Activated T-helper 2 cell treated with anti-CD3 and anti-CD28 coated beads, Interferon-gamma antibody, Interleukin-2, Interleukin-4, amounts not matched to agents 10 μg/mL and 5 μg/mL and 100 μg/mL, durations not matched to agents 14 hours and 24 hours and 36 hours (primary cell): ENCODE measurements at regions of chr2 and their contacts with region 1.

Region 1: GRCh38 chr2:165953655-165954606 is at the start of gene TTC21B:
- DNase-seq: peak; percentile 91
- H3K4me3 Mint-ChIP-seq: peak within 1 kb of the TSS; percentile 43
- H3K27ac Mint-ChIP-seq: no peak within 1 kb of the TSS
- H3K4me1 Mint-ChIP-seq: peaks cover 6% of the 10 kb centered on the region
- H3K27me3 Mint-ChIP-seq: no peaks in the 10 kb centered on the region
- total RNA-seq, gene TTC21B: 19.7 and 23.4 TPM in 2 replicates

Region 2: GRCh38 chr2:165401285-165401852 is 552.6 kb before region 1 on chr2:
- intact Hi-C with region 1: loop called (anchors 5 kb)
- DNase-seq: no peak
- H3K4me3 Mint-ChIP-seq: no peak overlapping the region
- H3K27ac Mint-ChIP-seq: no peak overlapping the region
- H3K4me1 Mint-ChIP-seq: peaks cover 5% of the 10 kb centered on the region
- H3K27me3 Mint-ChIP-seq: peaks cover 20% of the 10 kb centered on the region

Region 3: DNA sequence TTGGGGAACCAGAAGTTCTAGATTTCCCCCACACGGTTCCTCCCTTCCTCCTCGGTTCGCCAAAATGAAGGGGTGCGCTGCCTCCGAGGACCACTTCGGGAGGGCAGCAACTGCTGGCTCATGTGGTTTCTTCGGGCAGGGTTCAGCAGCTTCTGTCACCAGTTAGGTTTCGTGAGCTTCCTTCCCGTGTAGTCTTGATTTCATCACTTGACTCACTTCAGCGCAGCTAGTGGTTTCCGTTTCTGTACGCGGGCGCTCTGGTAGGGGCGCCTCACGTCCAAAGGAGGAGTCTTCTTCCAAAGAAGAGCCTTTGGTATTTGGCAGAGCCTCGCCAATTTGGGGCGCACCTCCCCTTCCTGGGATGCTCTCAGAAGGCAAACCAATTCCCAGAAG is 159.4 kb before region 1 on chr2:
- intact Hi-C with region 1: loop called (anchors 5 kb)
- DNase-seq: peak; percentile 76
- H3K4me3 Mint-ChIP-seq: peak overlapping the region; percentile 93
- H3K27ac Mint-ChIP-seq: peak overlapping the region; percentile 96
- H3K4me1 Mint-ChIP-seq: peaks cover 54% of the 10 kb centered on the region
- H3K27me3 Mint-ChIP-seq: no peaks in the 10 kb centered on the region

Region 4: DNA sequence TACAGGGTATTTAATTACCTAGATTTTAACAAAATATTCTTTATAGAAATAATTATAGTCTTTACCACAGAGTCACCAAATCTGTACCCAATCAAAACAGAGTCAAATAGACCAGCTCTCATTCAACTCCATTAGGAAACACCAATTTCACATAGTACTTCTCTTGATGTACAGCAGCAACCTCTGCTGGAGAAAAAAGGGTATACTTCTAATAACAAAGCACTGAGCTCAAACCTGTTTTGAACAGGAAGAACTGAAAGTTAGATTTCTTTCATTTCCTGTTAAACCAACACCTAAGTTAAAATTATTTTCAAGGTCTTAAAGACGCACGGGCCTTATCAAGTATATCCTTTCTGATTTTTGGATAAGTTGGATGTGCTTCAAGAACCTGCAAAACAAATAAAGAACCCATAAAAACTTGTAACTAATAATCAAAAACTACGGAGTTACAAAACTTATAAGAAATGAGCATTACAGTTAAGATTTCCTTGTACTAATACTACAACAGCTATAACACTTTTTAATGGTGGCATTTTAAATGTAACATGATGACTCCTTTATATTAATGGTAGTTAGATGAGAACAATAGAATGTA is 79.4 kb before region 1 on chr2:
- intact Hi-C with region 1: loop called (anchors 5 kb)
- DNase-seq: no peak
- H3K4me3 Mint-ChIP-seq: no peak overlapping the region
- H3K27ac Mint-ChIP-seq: no peak overlapping the region
- H3K4me1 Mint-ChIP-seq: peaks cover 24% of the 10 kb centered on the region
- H3K27me3 Mint-ChIP-seq: no peaks in the 10 kb centered on the region

Region 5: DNA sequence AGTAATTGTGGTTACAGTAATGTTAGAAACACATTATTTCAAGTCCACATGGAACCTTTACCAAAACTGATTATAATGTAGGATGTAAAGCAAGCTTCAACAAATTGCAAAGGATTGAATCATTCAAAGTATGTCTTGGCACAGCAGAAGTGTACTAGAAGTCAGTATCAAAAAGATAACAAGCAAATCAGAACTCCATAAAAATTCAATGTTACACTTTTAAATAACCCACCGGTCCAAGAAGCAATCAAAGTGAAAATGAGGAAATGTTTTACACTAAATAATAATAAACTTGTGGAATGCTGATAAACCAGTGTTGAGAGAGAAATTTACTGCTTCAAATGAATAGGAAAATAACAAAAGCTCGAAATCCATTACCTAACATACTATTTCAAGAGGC is 48.1 kb before region 1 on chr2:
- intact Hi-C with region 1: loop called (anchors 5 kb)
- DNase-seq: no peak
- H3K4me3 Mint-ChIP-seq: no peak overlapping the region
- H3K27ac Mint-ChIP-seq: no peak overlapping the region
- H3K4me1 Mint-ChIP-seq: peaks cover 10% of the 10 kb centered on the region
- H3K27me3 Mint-ChIP-seq: no peaks in the 10 kb centered on the region

Region 6: DNA sequence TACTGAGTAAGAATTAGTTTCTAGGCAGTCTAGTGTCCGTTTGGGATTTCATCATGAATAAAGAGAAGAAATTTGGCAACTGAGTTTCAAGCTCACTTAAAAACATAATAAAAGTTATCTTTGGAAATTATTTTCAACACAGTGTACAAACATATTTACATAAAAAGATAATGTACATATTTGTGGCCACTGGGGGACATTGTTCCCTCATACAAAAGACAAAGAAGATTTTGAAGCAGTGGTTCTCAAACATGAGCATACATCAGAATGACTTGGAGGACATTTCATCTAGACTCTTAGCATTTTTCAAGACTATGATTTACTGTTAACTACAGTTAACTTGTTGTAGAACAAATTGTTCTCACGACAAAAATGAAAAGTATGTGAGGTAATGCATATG is 15.3 kb after region 1 on chr2:
- intact Hi-C with region 1: loop called (anchors 2 kb)
- DNase-seq: no peak
- H3K4me3 Mint-ChIP-seq: no peak overlapping the region
- H3K27ac Mint-ChIP-seq: no peak overlapping the region
- H3K4me1 Mint-ChIP-seq: no peaks in the 10 kb centered on the region
- H3K27me3 Mint-ChIP-seq: peaks cover 5% of the 10 kb centered on the region

Region 7: DNA sequence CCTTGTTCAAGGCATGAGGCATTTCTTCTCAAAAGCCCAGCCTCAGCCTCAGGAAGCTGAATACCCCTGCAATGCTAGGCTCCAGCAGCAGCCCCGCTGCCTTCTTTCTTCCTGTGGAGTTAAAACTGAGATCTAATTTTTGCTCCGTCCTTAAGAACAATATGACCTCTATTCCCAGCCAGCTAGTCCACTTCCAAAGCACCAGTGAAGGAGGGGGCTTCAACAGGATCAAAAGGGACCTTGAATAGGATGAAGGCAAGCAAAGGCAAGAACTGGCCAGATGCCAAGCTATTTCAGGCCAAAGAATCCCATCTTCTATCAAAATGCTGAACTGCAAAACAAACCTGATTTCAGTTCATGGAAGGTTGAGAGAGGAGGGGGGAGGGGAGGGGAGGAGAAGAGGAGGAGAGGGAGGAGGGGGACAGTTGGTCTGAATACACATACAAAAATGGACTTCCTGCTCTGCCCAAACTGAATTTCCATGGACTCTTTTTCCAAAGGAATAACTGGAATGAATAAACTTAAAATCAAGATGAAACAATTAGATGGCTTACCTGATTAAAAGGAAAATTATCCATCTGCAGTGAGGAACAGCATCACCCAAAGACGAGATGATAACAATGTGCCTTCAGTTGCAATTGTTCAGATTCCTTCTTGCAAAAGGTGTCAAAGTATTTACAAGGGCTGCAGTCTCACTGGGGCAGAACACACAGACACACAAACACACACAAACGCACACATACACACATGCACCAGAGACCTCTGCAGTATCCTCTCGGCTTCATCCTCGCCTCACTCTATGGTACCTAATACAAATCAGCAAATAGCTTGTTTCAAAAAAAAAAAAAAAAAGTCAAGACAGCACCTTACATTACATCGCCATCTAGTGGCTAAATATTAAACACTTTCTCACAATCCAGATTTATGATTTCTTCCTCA is 173.6 kb after region 1 on chr2 and contains the start of gene SCN1A:
- intact Hi-C with region 1: loop called (anchors 1 kb)
- DNase-seq: no peak
- H3K4me3 Mint-ChIP-seq: no peak within 1 kb of the TSS
- H3K27ac Mint-ChIP-seq: no peak within 1 kb of the TSS
- H3K4me1 Mint-ChIP-seq: peaks cover 4% of the 10 kb centered on the region
- H3K27me3 Mint-ChIP-seq: peaks cover 6% of the 10 kb centered on the region
- total RNA-seq, gene SCN1A: not detected in 2 replicates